ENCODE measurements at regions of chr14 and their contacts with region 1.

Region 1: DNA sequence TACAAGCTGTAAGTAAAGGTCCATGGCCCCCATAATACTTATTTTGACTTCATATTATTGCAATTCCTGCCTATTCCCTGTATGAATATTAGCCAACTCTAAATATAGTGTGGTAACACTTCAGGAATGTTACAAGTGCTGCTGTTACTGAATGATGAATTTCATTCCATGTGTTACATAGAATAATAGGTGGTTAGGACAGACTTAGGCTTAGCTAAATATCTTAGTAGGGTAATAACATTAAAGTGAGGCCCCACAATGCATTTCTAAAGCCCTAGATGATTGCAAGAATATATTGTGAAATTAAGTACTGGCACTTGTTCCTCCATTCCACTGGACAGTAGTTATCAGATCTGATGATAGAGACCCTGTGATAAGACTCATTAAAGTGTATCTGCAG is 182.7 kb downstream of the PCNX1 start:
- DNase-seq: no peak
- H3K4me3 ChIP-seq: no peak overlapping the region
- H3K27ac ChIP-seq: no peak overlapping the region
- H3K27me3 ChIP-seq: no peaks in the 10 kb centered on the region
- CTCF ChIP-seq: no peak

Region 2: GRCh38 chr14:71103662-71104484 is 13.9 kb after region 1 on chr14:
- CTCF ChIA-PET with region 1: interaction called, 15 read pairs
- POLR2A ChIA-PET with region 1: no interaction called
- DNase-seq: peak; percentile 42
- H3K4me3 ChIP-seq: no peak overlapping the region
- H3K27ac ChIP-seq: no peak overlapping the region
- H3K27me3 ChIP-seq: no peaks in the 10 kb centered on the region
- CTCF ChIP-seq: peak; percentile 88

Measured in AG04450 (cell line).